ENCODE measurements at regions of chr6 and their contacts with region 1.

Region 1: DNA sequence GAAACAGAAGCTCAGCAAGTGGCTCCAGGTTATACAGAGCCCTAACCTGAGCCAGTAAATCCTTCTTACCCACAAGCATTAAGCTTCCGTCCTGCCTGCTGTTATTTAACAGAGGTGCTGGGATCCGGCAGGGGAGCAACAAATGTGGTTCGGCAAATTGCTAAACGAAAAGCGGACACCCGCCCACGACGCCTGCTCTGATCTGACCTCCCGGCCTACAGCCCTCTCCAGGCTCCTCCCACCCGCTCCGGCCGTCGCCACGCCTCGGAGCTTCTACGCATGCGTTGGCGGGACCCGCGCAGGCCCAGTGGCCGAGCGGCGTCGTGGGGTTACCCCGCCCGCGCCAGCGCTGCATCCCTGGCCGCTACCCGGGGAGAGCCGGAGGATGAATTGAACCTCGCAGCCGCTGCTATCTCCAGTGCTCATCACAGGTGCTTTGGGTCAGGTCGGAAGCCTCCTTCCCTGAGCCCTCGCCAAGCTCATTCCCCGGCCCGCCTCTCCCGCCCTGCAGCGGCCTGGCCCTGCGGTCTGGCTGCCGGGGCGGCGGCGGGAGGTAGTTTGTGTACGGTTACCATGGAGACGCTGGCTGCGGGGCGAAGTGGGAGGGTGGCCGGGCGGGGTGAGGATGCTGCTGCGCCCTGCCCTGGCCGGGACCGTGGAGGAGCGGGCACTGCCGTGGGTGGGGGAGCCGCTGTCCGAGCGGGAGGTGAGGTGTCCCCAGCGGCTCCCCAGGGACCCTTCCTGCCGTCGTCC is at the start of gene ARMC2:
- DNase-seq: peak; percentile 98
- ATAC-seq: peak; percentile 94
- H3K4me3 Mint-ChIP-seq: peak within 1 kb of the TSS; percentile 86
- H3K27ac Mint-ChIP-seq: peak within 1 kb of the TSS; percentile 83
- H3K4me1 Mint-ChIP-seq: peaks cover 14% of the 10 kb centered on the region
- H3K27me3 Mint-ChIP-seq: peaks cover under 1% of the 10 kb centered on the region
- CTCF ChIP-seq: no peak
- total RNA-seq, gene ARMC2: 3.5 and 4.3 TPM in 2 replicates

Region 2: DNA sequence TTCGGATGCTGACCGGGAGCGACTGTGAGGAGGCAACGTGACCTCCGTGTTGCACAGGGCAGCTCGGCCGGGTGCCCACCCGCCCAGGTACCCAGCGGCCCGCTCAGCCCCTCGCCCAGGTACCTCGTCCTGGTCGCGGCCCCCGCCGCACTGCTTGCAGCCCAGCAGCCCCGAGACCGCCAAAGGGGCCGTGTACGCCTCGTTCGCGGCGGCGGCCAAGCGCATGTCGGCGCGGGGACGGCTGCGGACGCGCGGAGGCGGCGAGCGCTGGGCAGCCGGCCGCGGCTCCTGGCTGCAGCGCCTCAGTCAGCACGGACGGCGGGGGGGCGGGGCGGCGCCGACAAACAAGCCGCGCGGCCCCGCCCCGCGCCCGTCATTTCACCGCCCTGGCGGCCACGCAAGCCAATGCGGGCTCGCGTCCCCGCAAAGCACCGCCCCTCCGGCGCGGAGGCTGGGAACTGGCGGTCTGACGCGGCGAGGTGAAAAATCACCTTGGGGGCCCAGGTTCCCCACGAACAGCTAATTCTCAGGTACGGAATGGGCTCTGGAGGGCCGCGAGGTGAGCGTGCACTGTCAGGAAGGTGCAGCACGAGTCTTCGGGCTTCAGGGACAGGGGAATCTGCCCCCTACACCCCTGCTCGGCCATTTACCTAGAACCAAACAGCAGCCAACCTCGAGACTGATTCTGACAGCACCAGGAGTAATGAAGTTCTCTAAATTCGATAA is 161.1 kb after region 1 on chr6:
- CTCF ChIA-PET with region 1: no interaction called
- POLR2A ChIA-PET with region 1: no interaction called
- intact Hi-C with region 1: loop called (anchors 1 kb)
- DNase-seq: peak; percentile 87
- ATAC-seq: peak; percentile 97
- H3K4me3 Mint-ChIP-seq: peak overlapping the region; percentile 97
- H3K27ac Mint-ChIP-seq: peak overlapping the region; percentile 95
- H3K4me1 Mint-ChIP-seq: peaks cover 65% of the 10 kb centered on the region
- H3K27me3 Mint-ChIP-seq: no peaks in the 10 kb centered on the region
- CTCF ChIP-seq: no peak

Region 3: DNA sequence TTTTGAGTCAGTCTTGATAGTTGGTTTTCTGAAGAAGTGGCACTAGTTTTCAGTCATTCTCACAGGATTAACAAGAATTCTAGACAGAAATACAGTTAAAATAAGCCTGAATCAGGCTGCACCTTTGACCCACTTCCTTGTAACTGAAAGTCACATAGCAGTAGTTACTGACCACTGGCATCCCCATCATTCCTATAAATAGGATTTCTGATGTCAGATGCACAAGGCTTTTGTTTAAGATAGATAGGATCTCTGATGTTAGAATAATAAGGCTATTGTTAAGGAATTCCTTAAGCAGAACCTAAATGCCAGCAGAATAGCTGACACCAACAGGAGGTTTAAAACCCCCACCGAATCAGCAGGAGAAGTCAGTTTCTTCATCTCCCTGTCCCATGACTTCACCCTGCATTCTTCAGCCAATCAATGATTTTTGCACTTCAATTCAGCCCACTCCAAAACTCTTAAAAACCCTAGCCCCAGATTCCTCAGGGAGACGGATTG is 665.3 kb after region 1 on chr6:
- CTCF ChIA-PET with region 1: no interaction called
- POLR2A ChIA-PET with region 1: no interaction called
- intact Hi-C with region 1: no loop called
- DNase-seq: no peak
- ATAC-seq: no peak
- H3K4me3 Mint-ChIP-seq: no peak overlapping the region
- H3K27ac Mint-ChIP-seq: no peak overlapping the region
- H3K4me1 Mint-ChIP-seq: peaks cover 19% of the 10 kb centered on the region
- H3K27me3 Mint-ChIP-seq: no peaks in the 10 kb centered on the region
- CTCF ChIP-seq: no peak